ENCODE measurements at regions of chr5 and their contacts with region 1.

Region 1: GRCh38 chr5:154405078-154405792 is 40.6 kb upstream of the SAP30L start:
- DNase-seq: peak; percentile 60 to 91 (median 79)
- ATAC-seq: peak; percentile 96 to 100 (median 99)
- H3K4me3 ChIP-seq: peak overlapping the region in 2 of 4 donors; percentile 28 to 41
- H3K27ac ChIP-seq: no peak overlapping the region
- H3K4me1 ChIP-seq: peaks cover 0 to 3% (median 0%) of the 10 kb centered on the region in 3 donors
- H3K27me3 ChIP-seq: no peaks in the 10 kb centered on the region
- CTCF ChIP-seq: peak; percentile 64 to 85 (median 82)

Region 2: GRCh38 chr5:154072414-154073171 is 332.6 kb before region 1 on chr5:
- intact Hi-C with region 1: loop called in 2 of 3 experiments (anchors 2 to 5 kb)
- DNase-seq: peak; percentile 48 to 95 (median 83)
- ATAC-seq: peak; percentile 88 to 100 (median 98)
- H3K4me3 ChIP-seq: no peak overlapping the region
- H3K27ac ChIP-seq: no peak overlapping the region
- H3K4me1 ChIP-seq: peaks cover 0 to 5% (median 0%) of the 10 kb centered on the region in 3 donors
- H3K27me3 ChIP-seq: no peaks in the 10 kb centered on the region
- CTCF ChIP-seq: peak; percentile 87 to 92 (median 90)

Measured in pancreas (tissue), 10 donors.